CD4-positive, alpha-beta memory T cell (primary cell): ENCODE measurements at regions of chr5 and their contacts with region 1.

Region 1: GRCh38 chr5:65102828-65103711 is 334.3 kb downstream of the CWC27 start:
- DNase-seq: peak; percentile 52 to 67 (median 57)
- H3K4me3 ChIP-seq: peak overlapping the region; percentile 59 to 60
- H3K4me3 Mint-ChIP-seq: peak overlapping the region; percentile 84 to 90 (median 88)
- H3K27ac ChIP-seq: peak overlapping the region; percentile 57
- H3K27ac Mint-ChIP-seq: peak overlapping the region; percentile 82 to 96 (median 91)
- H3K4me1 ChIP-seq: peaks cover 14% of the 10 kb centered on the region
- H3K4me1 Mint-ChIP-seq: peaks cover 17 to 48% (median 29%) of the 10 kb centered on the region in 4 donors
- H3K27me3 ChIP-seq: no peaks in the 10 kb centered on the region
- H3K27me3 Mint-ChIP-seq: no peaks in the 10 kb centered on the region

Region 2: DNA sequence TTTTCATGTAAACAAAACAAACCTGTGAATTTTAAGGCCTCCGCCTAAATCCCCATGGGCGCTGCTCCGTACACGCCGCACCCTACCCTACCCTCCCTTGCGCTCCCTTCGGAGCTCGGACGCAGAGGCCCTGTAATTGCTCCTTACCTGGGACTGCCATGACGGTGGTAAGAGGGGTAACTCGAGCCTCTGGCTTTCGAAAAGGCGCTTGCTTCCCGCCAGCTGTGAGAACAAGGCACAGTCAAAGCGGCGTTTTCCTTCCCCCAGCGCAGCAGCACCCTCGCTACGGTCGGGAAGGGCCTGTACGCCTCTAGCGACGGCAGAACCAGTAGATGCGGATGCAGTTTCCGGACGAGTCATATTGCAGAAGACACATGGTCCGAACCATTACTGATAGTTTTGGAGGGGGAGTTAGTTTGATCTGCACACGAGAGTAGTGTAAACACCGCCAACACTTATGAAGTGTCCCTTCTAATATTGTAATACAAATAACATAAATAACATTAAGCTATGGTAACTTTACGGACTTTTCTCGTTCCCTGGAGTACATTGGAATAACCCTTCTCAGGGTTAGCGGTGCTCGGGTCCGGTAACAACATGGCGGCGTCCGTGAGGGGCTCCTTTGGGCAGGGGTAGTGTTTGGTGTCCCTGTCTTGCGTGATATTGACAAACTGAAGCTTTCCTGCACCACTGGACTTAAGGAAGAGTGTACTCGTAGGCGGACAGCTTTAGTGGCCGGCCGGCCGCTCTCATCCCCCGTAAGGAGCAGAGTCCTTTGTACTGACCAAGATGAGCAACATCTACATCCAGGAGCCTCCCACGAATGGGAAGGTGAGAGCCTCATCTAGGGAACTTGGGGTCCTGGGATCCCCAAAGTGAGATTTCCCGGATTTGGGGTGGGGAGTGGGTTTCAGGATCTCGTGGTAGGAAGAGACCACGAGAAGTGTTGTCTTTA is 334.4 kb before region 1 on chr5 and contains the starts of genes CWC27 and SREK1IP1:
- CTCF ChIA-PET with region 1: no interaction called
- POLR2A ChIA-PET with region 1: interaction called, 3 read pairs
- intact Hi-C with region 1: loop called (anchors 1 kb)
- DNase-seq: peak; percentile 85 to 88 (median 85)
- H3K4me3 ChIP-seq: peak within 1 kb of the TSS; percentile 83 to 94
- H3K4me3 Mint-ChIP-seq: peak within 1 kb of the TSS; percentile 98 to 100 (median 100)
- H3K27ac ChIP-seq: peak within 1 kb of the TSS; percentile 86
- H3K27ac Mint-ChIP-seq: peak within 1 kb of the TSS; percentile 95 to 100 (median 98)
- H3K4me1 ChIP-seq: peaks cover 47% of the 10 kb centered on the region
- H3K4me1 Mint-ChIP-seq: peaks cover 49 to 82% (median 57%) of the 10 kb centered on the region in 4 donors
- H3K27me3 ChIP-seq: no peaks in the 10 kb centered on the region
- H3K27me3 Mint-ChIP-seq: no peaks in the 10 kb centered on the region
- total RNA-seq, gene CWC27: 16.8 to 17.8 TPM
- total RNA-seq, gene SREK1IP1: 18.4 to 20.2 TPM

Region 3: DNA sequence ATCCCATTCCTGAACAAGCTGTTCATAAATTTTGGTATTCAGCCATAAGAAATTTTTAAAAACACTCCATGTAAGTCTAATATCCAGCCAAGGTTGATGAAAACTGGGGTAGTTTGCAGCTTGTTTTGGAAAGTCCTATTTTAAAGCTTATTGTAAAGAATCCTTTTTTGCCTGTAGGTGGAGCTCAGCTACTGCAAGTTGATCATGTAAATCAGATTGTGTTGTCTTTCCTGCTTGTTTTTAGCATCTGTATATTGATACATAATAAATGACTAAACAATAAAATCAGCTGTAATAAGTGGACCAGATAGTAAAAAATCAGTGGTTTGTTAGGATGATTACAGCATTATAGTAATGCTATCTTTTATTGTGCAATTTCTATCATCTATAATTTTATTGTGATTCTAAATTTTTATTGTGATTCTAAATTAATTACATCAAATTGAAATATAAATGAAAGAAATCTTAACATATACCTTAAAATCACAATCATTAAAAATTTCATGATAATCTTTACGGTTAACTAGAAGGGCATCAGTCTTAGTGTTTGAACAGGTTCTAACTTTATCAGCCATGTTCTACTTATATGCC is 291.9 kb before region 1 on chr5:
- CTCF ChIA-PET with region 1: interaction called, 9 read pairs
- POLR2A ChIA-PET with region 1: no interaction called
- intact Hi-C with region 1: loop called (anchors 2 kb)
- DNase-seq: peak; percentile 27 to 44 (median 30)
- H3K4me3 ChIP-seq: no peak overlapping the region
- H3K4me3 Mint-ChIP-seq: no peak overlapping the region
- H3K27ac ChIP-seq: no peak overlapping the region
- H3K27ac Mint-ChIP-seq: no peak overlapping the region
- H3K4me1 ChIP-seq: no peaks in the 10 kb centered on the region
- H3K4me1 Mint-ChIP-seq: no peaks in the 10 kb centered on the region
- H3K27me3 ChIP-seq: no peaks in the 10 kb centered on the region
- H3K27me3 Mint-ChIP-seq: no peaks in the 10 kb centered on the region

Region 4: DNA sequence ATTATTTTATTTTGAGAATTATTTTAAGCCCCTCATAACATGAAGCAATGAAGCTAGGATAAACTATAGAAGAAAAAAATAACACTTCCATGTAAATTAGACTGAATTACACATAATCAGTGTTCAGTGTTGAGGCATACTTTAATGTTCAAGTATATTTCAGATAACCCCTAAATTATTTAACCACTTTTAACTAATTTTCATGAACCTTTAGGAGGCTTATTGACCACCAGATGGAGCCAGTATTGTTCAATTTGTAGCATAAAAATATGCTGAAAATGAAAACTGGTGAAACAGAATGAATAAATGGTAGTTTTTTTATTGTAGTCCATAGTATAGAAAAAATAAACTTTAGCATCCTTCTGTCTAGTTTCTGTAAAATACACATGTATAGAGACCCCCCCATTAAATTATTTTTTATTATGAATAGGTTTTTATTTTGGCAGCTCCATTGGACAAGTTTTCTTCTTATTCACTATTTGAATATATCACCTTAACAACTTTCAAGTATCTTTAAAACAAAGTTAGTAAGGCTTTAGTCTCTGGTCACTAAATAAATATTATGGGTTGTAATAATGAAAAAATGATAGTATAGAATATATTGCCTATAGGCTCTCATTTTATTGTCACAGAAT is 144.2 kb before region 1 on chr5:
- CTCF ChIA-PET with region 1: interaction called, 8 read pairs
- POLR2A ChIA-PET with region 1: no interaction called
- intact Hi-C with region 1: loop called (anchors 5 kb)
- DNase-seq: peak in 4 of 5 donors; percentile 6 to 21 (median 11)
- H3K4me3 ChIP-seq: no peak overlapping the region
- H3K4me3 Mint-ChIP-seq: no peak overlapping the region
- H3K27ac ChIP-seq: no peak overlapping the region
- H3K27ac Mint-ChIP-seq: no peak overlapping the region
- H3K4me1 ChIP-seq: no peaks in the 10 kb centered on the region
- H3K4me1 Mint-ChIP-seq: no peaks in the 10 kb centered on the region
- H3K27me3 ChIP-seq: no peaks in the 10 kb centered on the region
- H3K27me3 Mint-ChIP-seq: no peaks in the 10 kb centered on the region

Region 5: GRCh38 chr5:65035211-65036206 is 67.6 kb before region 1 on chr5:
- CTCF ChIA-PET with region 1: interaction called, 16 read pairs
- POLR2A ChIA-PET with region 1: interaction called, 16 read pairs
- intact Hi-C with region 1: loop called (anchors 1 kb)
- DNase-seq: peak; percentile 86 to 94 (median 90)
- H3K4me3 ChIP-seq: peak overlapping the region; percentile 66 to 74
- H3K4me3 Mint-ChIP-seq: peak overlapping the region; percentile 66 to 92 (median 84)
- H3K27ac ChIP-seq: peak overlapping the region; percentile 90
- H3K27ac Mint-ChIP-seq: peak overlapping the region; percentile 80 to 100 (median 95)
- H3K4me1 ChIP-seq: peaks cover 30% of the 10 kb centered on the region
- H3K4me1 Mint-ChIP-seq: peaks cover 18 to 38% (median 28%) of the 10 kb centered on the region in 4 donors
- H3K27me3 ChIP-seq: no peaks in the 10 kb centered on the region
- H3K27me3 Mint-ChIP-seq: no peaks in the 10 kb centered on the region

Region 6: GRCh38 chr5:65076251-65076869 is 26.7 kb before region 1 on chr5:
- CTCF ChIA-PET with region 1: interaction called, 4 read pairs
- POLR2A ChIA-PET with region 1: no interaction called
- intact Hi-C with region 1: loop called (anchors 1 kb)
- DNase-seq: peak; percentile 46 to 63 (median 53)
- H3K4me3 ChIP-seq: no peak overlapping the region
- H3K4me3 Mint-ChIP-seq: no peak overlapping the region
- H3K27ac ChIP-seq: no peak overlapping the region
- H3K27ac Mint-ChIP-seq: peak overlapping the region in 1 of 7 donors; percentile 43
- H3K4me1 ChIP-seq: no peaks in the 10 kb centered on the region
- H3K4me1 Mint-ChIP-seq: peaks cover 0 to 5% (median 5%) of the 10 kb centered on the region in 4 donors
- H3K27me3 ChIP-seq: no peaks in the 10 kb centered on the region
- H3K27me3 Mint-ChIP-seq: peaks cover 2 to 7% of the 10 kb centered on the region in 2 donors